Keratinocyte (primary cell): ENCODE measurements at regions of chr20 and their contacts with region 1.

Region 1: GRCh38 chr20:24432046-24432442 is 37.4 kb upstream of the SYNDIG1 start:
- DNase-seq: no peak
- H3K4me3 ChIP-seq: no peak overlapping the region
- H3K27ac ChIP-seq: no peak overlapping the region
- H3K4me1 ChIP-seq: no peaks in the 10 kb centered on the region
- H3K27me3 ChIP-seq: no peaks in the 10 kb centered on the region
- CTCF ChIP-seq: no peak

Region 2: DNA sequence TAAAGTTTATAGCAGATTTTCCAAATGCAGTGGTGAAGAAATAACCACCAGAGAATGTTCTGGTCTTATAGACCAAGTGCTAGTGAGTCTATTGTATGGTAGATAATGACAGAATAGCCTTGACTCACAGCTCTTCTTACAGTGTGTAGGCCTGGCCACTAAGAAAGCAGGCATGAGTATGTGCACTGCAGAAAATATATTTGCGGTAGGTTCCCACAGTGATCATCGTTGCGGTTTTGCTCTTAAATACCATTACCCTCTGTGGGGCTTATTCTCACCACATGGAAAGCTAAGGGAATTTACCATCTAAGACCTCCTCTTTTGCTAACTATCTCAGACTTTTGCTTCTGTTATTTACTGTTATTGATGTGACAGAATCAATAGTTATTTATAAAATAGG is 174.9 kb before region 1 on chr20:
- dilution Hi-C with region 1: no loop called
- DNase-seq: no peak
- H3K4me3 ChIP-seq: no peak overlapping the region
- H3K27ac ChIP-seq: no peak overlapping the region
- H3K4me1 ChIP-seq: no peaks in the 10 kb centered on the region
- H3K27me3 ChIP-seq: no peaks in the 10 kb centered on the region
- CTCF ChIP-seq: no peak

Region 3: GRCh38 chr20:24379484-24379927 is 52.5 kb before region 1 on chr20:
- dilution Hi-C with region 1: no loop called
- DNase-seq: no peak
- H3K4me3 ChIP-seq: no peak overlapping the region
- H3K27ac ChIP-seq: no peak overlapping the region
- H3K4me1 ChIP-seq: no peaks in the 10 kb centered on the region
- H3K27me3 ChIP-seq: no peaks in the 10 kb centered on the region
- CTCF ChIP-seq: no peak

Region 4: DNA sequence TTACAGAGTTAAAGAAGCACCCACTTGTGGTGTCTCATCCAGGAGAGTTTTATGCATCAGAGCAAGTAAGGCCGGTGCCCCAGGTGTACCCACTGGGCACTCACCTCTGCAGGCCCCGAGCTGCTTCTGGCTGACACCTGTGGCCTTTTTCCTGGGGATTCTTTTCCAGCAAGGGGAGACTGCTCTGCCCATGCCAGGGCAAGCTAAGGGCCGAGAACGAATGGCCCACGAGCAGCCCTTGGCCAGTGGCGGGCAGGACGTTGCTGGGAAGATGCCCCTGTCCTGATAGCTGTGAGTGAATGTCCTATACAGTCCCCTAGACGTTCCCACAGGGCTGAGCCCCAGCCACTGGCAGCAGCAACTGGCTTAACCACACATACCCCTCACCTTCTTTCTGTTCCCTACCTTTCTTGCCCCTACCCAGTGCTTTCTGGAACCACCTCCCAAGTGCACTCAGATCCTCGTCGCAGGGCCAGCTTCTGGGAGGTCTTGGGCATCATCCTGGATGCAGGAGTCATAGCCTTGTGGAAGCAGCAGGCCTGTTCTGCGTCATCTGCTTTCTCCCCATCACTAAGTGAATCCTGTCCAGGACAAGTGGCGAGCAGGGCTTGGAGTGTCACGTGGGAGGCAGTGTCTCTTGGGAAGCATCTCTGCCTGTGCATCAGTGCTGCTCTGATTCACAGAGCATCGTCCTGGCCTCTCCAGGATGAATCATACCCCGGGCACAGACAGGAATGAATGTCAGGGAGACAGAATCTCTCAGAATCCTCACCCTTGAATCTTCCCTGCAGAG is 69.9 kb after region 1 on chr20:
- dilution Hi-C with region 1: loop called (anchors 5 kb)
- DNase-seq: no peak
- H3K4me3 ChIP-seq: no peak overlapping the region
- H3K27ac ChIP-seq: no peak overlapping the region
- H3K4me1 ChIP-seq: no peaks in the 10 kb centered on the region
- H3K27me3 ChIP-seq: no peaks in the 10 kb centered on the region
- CTCF ChIP-seq: no peak